ENCODE measurements at regions of chr4 and their contacts with region 1.

Region 1: GRCh38 chr4:149999485-150000074 is 78.7 kb upstream of the DCLK2 start:
- DNase-seq: peak in 36 of 42 donors; percentile 5 to 82 (median 52)

Region 2: GRCh38 chr4:149441338-149441737 is 558.2 kb before region 1 on chr4:
- intact Hi-C with region 1: no loop called
- DNase-seq: no peak

Region 3: GRCh38 chr4:150038335-150039076 is 38.9 kb after region 1 on chr4:
- intact Hi-C with region 1: no loop called
- DNase-seq: no peak

Region 4: GRCh38 chr4:150224896-150225591 is 225.5 kb after region 1 on chr4:
- intact Hi-C with region 1: loop called (anchors 10 kb)
- DNase-seq: no peak

Measured in head of caudate nucleus (tissue), 42 donors.